Endothelial cell of umbilical vein (primary cell): ENCODE measurements at regions of chr5 and their contacts with region 1.

Region 1: GRCh38 chr5:115586601-115587048 is 15.7 kb downstream of the TICAM2 start:
- DNase-seq: peak; percentile 41
- H3K4me3 ChIP-seq: no peak overlapping the region
- H3K27ac ChIP-seq: no peak overlapping the region
- H3K4me1 ChIP-seq: peaks cover 4% of the 10 kb centered on the region
- H3K27me3 ChIP-seq: no peaks in the 10 kb centered on the region
- CTCF ChIP-seq: no peak
- POLR2A ChIP-seq: no peak

Region 2: GRCh38 chr5:115098041-115098702 is 488.5 kb before region 1 on chr5:
- CTCF ChIA-PET with region 1: no interaction called
- POLR2A ChIA-PET with region 1: no interaction called
- dilution Hi-C with region 1: no loop called
- intact Hi-C with region 1: loop called (anchors 5 kb)
- DNase-seq: peak; percentile 52
- H3K4me3 ChIP-seq: no peak overlapping the region
- H3K27ac ChIP-seq: no peak overlapping the region
- H3K4me1 ChIP-seq: no peaks in the 10 kb centered on the region
- H3K27me3 ChIP-seq: peaks cover 0 to 8% of the 10 kb centered on the region in 2 experiments
- CTCF ChIP-seq: peak; percentile 52 to 76
- POLR2A ChIP-seq: no peak

Region 3: DNA sequence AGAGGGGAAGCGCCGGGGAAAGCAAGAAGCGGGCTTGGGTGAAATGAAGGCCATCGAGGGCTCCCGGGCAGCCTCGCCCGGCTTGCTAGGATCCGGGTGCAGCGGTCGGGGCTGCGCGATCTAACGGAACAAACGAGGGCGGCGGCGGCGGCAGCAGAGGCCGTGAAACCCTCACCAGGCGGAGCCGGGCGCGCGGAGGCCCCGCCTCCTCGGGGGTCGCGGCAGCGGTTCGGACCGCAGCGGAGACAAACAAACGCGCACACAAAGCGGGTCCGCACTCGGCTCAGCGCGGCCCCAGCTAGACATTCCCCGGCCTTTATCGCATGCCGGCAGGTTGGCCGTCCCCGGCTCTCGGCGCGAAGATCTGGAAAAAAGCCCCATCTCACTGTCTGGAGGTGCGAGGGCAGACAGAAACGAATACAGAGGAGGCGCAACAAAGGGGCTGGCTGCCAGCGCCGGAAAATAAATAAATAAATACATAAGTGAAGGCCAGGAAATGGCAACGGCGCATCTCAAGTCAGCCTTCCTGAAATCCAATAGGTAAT is 406.4 kb before region 1 on chr5:
- CTCF ChIA-PET with region 1: no interaction called
- POLR2A ChIA-PET with region 1: no interaction called
- dilution Hi-C with region 1: no loop called
- intact Hi-C with region 1: loop called (anchors 10 kb)
- DNase-seq: peak; percentile 33
- H3K4me3 ChIP-seq: peak overlapping the region; percentile 36 to 53 (median 44)
- H3K27ac ChIP-seq: no peak overlapping the region
- H3K4me1 ChIP-seq: peaks cover 9% of the 10 kb centered on the region
- H3K27me3 ChIP-seq: peaks cover 53 to 74% of the 10 kb centered on the region in 2 experiments
- CTCF ChIP-seq: no peak
- POLR2A ChIP-seq: no peak

Region 4: GRCh38 chr5:115309751-115310370 is 276.8 kb before region 1 on chr5:
- CTCF ChIA-PET with region 1: interaction called, 58 read pairs
- POLR2A ChIA-PET with region 1: no interaction called
- dilution Hi-C with region 1: no loop called
- intact Hi-C with region 1: loop called (anchors 1 kb)
- DNase-seq: peak; percentile 69
- H3K4me3 ChIP-seq: no peak overlapping the region
- H3K27ac ChIP-seq: no peak overlapping the region
- H3K4me1 ChIP-seq: no peaks in the 10 kb centered on the region
- H3K27me3 ChIP-seq: no peaks in the 10 kb centered on the region
- CTCF ChIP-seq: peak in 1 of 2 donors; percentile 16
- POLR2A ChIP-seq: no peak

Region 5: GRCh38 chr5:115460472-115460871 is 126.2 kb before region 1 on chr5:
- CTCF ChIA-PET with region 1: no interaction called
- POLR2A ChIA-PET with region 1: no interaction called
- dilution Hi-C with region 1: no loop called
- intact Hi-C with region 1: loop called (anchors 5 kb)
- DNase-seq: peak; percentile 91
- H3K4me3 ChIP-seq: no peak overlapping the region
- H3K27ac ChIP-seq: peak overlapping the region; percentile 72
- H3K4me1 ChIP-seq: peaks cover 37% of the 10 kb centered on the region
- H3K27me3 ChIP-seq: no peaks in the 10 kb centered on the region
- CTCF ChIP-seq: no peak
- POLR2A ChIP-seq: no peak

Region 6: DNA sequence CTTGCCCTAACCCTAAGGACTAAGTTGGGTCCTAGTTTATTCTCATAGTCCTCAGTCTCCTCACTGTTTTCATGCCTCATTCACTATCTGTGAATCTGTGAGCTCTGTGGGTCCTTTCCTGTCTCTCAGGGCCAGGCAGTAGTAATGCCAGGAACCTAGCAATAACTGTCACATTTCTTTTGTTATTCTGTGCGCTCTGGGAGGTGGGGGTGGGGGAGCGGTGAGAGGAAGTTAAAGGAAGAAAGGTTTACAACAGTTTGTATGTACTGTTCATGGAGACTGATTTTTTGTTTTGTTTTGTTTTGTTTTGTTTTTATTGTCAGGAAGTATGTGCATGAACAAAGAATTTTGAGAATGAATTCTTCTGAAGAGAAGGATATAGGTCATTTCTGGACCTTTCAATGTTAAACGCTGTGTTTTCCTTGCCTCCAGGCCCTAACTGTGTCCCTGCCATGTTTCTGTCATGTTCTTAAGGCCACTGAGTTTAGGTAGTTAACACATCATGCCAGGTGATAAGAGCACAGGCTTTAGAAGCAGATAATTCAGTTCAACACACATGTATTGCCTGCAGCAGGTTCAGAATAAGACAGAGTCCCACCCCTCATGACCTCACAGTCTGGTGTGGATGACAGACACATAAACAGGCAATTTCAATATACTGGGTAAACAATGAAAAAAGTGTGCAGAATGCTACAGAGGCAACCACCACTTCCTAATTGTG is 28.8 kb before region 1 on chr5:
- CTCF ChIA-PET with region 1: no interaction called
- POLR2A ChIA-PET with region 1: no interaction called
- dilution Hi-C with region 1: no loop called
- intact Hi-C with region 1: no loop called
- DNase-seq: peak; percentile 74
- H3K4me3 ChIP-seq: no peak overlapping the region
- H3K27ac ChIP-seq: peak overlapping the region; percentile 94
- H3K4me1 ChIP-seq: peaks cover 29% of the 10 kb centered on the region
- H3K27me3 ChIP-seq: no peaks in the 10 kb centered on the region
- CTCF ChIP-seq: no peak
- POLR2A ChIP-seq: no peak

Region 7: DNA sequence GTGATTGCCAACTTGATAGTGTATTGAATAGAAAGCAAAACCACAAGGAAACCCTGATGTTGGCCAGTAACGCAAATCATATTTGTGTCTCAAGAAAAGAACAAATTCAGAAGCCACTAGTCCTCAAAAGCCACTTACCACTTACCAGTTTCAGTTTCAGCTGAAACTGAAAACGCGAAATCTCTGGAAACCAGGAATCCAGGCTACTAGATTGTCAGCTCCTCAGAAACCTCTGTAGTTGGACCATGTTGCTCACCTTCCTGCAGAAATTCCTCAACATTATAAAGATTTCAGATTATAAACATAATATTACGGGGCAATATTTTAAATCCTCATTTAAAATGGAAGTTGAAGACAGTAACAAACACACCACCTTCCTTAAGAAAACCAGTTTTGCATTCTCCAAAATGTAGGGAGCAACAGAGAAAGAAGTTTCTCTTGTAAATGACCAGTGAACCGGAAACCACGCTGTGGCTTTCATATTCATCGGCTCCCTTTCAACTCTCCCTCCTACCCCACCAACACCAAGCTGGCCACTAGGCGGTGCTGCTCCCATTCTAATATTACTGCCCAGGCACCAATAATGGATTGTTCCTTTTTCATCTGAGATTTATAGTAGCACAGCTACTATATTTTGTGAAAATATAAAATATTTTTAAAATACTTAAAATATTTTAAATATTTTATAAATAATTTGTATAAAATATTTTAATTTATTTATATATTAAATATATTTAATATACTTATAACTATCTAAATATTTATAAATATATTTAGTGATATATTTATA is 47.9 kb after region 1 on chr5:
- CTCF ChIA-PET with region 1: no interaction called
- POLR2A ChIA-PET with region 1: no interaction called
- dilution Hi-C with region 1: no loop called
- intact Hi-C with region 1: no loop called
- DNase-seq: peak; percentile 78
- H3K4me3 ChIP-seq: peak overlapping the region in 2 of 3 experiments; percentile 21 to 55
- H3K27ac ChIP-seq: no peak overlapping the region
- H3K4me1 ChIP-seq: peaks cover 5% of the 10 kb centered on the region
- H3K27me3 ChIP-seq: peaks cover 2 to 5% of the 10 kb centered on the region in 2 experiments
- CTCF ChIP-seq: peak; percentile 75 to 89
- POLR2A ChIP-seq: no peak